Activated naive CD8-positive, alpha-beta T cell treated with anti-CD3 and anti-CD28 coated beads, Interleukin-2, amount 10 ng/mL, durations not matched to agents 7 days and 5 days (primary cell): ENCODE measurements at regions of chr5 and their contacts with region 1.

Region 1: GRCh38 chr5:139482050-139482889 is at the start of gene STING1:
- DNase-seq: peak; percentile 67
- ATAC-seq: peak; percentile 75
- H3K4me3 Mint-ChIP-seq: peak within 1 kb of the TSS; percentile 94
- H3K27ac Mint-ChIP-seq: peak within 1 kb of the TSS; percentile 97
- H3K4me1 Mint-ChIP-seq: peaks cover 21% of the 10 kb centered on the region
- H3K27me3 Mint-ChIP-seq: no peaks in the 10 kb centered on the region
- total RNA-seq, gene STING1: 63.6 to 68.4 TPM

Region 2: DNA sequence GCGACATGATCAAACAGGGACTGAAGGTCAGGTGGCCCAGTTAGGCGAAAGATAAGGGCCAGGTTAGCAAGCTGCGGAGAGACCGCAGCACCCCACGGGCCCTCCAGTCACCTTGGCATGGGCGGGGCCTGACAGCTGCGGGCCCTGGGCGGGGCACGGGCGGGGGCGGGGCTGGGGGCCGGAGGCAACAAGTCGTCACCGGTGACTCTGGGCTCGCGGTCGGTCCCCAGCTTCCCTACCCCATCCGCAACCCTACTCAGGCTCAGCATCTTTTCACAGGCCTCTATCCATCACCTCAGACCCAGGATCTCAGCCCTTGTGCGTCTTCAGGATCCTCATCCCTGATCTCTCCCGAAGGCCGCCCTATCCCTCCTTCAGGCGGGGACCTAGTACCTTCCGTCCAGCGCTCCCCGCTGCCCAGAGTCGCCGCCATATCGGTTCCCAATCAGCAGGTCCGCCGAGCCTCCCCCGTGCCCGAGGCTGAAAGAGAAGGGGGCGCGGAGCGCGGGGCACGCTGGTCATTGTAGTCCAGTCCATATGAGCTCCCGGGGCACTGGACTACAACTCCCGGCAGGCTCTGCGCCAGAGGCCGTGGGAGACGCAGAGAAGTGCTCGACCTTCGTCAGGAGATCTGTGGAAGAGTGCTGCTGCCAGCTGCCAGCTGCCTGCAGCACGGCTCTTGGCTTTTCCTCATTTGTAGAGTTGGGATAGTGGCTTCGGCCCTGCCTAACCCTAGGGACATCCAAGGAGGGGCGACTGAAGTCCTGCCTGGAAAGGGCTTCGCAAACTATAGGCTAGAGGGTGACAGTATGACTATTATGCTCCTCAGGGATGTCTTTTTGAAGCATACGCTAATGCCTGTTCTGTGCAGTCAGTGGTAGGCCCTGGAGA is 43.0 kb before region 1 on chr5 and contains the start of gene DNAJC18:
- POLR2A ChIA-PET with region 1: interaction called, 14 read pairs
- DNase-seq: peak; percentile 88
- ATAC-seq: peak; percentile 90
- H3K4me3 Mint-ChIP-seq: peak within 1 kb of the TSS; percentile 99
- H3K27ac Mint-ChIP-seq: peak within 1 kb of the TSS; percentile 100
- H3K4me1 Mint-ChIP-seq: peaks cover 27% of the 10 kb centered on the region
- H3K27me3 Mint-ChIP-seq: peaks cover 14% of the 10 kb centered on the region
- total RNA-seq, gene DNAJC18: 4.2 to 5.7 TPM

Region 3: DNA sequence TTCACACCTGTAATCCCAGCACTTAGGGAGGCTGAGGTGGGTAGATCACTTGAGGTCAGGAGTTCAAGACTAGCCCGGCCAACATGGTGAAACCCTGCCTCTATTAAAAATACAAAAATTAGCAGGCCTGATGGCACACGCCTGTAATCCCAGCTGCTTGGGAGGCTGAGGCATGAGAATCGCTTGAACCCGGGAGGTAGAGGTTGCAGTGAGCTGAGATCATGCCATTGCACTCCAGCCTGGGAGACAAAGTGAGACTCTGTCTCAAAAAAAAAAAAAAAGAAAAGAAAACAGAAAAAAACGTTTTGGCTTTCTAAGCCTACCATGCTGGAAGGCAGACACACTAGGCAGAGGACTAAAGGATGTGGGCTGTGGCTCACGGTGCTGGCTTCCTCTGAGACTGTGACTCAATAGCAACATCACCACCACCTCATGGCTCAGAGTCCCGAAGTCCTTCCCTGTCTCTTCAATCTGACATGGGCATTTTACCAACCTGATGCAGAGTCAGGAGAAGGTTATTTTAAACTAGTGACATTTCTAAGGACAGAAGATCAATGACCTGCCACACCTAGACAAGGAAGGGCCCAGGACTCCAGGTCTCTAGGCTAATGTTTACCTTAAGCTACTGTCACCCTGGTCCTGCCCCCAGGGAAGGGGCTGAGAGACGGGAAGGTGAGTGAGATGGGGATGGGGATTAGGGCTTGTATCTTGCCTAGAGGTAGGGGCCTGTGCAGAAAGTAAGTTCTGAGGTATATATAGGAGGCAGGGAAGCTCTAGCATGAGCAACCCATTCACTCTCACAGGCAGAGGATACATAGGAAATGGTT is 23.5 kb before region 1 on chr5:
- POLR2A ChIA-PET with region 1: interaction called, 19 read pairs
- DNase-seq: peak; percentile 65
- ATAC-seq: peak; percentile 96
- H3K4me3 Mint-ChIP-seq: peak overlapping the region; percentile 69
- H3K27ac Mint-ChIP-seq: peak overlapping the region; percentile 87
- H3K4me1 Mint-ChIP-seq: peaks cover 40% of the 10 kb centered on the region
- H3K27me3 Mint-ChIP-seq: peaks cover 12% of the 10 kb centered on the region

Region 4: GRCh38 chr5:139470821-139471300 is 11.4 kb before region 1 on chr5 and contains the start of gene SMIM33:
- POLR2A ChIA-PET with region 1: interaction called, 26 read pairs
- DNase-seq: peak; percentile 64
- ATAC-seq: peak; percentile 77
- H3K4me3 Mint-ChIP-seq: peak within 1 kb of the TSS; percentile 93
- H3K27ac Mint-ChIP-seq: peak within 1 kb of the TSS; percentile 98
- H3K4me1 Mint-ChIP-seq: peaks cover 52% of the 10 kb centered on the region
- H3K27me3 Mint-ChIP-seq: peaks cover 2% of the 10 kb centered on the region
- total RNA-seq, gene SMIM33: 0.34 to 0.44 TPM

Region 5: DNA sequence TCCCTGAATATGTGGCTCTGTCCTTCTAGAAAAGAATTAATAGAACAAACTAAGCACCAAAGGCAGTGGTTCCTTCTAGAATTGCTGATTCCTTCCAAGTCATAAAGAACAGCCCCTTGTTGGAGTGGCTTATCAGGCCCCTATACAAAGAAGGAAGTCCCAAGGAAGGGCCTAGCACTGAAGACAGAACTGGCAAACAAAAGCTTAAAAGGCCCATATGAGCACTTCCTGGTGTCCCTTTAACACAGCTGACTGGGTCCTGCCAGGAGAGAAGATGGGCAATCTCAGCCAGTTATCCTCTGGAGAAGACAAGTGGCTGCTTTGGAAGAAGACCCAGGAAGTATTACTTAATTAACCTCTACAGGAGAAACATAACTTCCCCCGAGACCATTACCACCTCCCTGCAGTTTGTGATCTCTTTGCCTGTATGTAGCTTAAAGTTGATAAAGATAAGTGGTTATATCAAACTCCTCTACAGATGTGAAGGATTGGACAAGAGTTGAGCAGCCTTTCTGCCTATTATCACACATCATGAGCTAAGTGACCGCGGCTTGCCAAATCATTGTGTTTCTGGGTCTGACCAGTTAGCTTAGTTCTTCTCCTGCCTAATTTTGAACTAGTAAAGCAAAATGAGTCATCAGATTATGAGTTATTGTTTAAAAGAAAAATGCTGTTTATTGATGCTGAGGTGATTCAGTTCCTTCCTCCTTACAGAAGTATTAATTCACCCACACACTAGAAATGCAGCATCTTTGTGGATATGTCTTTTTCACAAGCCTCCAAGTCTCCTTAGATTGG is 13.6 kb after region 1 on chr5:
- POLR2A ChIA-PET with region 1: interaction called, 10 read pairs
- DNase-seq: no peak
- ATAC-seq: no peak
- H3K4me3 Mint-ChIP-seq: no peak overlapping the region
- H3K27ac Mint-ChIP-seq: no peak overlapping the region
- H3K4me1 Mint-ChIP-seq: peaks cover 15% of the 10 kb centered on the region
- H3K27me3 Mint-ChIP-seq: peaks cover 12% of the 10 kb centered on the region

Region 6: DNA sequence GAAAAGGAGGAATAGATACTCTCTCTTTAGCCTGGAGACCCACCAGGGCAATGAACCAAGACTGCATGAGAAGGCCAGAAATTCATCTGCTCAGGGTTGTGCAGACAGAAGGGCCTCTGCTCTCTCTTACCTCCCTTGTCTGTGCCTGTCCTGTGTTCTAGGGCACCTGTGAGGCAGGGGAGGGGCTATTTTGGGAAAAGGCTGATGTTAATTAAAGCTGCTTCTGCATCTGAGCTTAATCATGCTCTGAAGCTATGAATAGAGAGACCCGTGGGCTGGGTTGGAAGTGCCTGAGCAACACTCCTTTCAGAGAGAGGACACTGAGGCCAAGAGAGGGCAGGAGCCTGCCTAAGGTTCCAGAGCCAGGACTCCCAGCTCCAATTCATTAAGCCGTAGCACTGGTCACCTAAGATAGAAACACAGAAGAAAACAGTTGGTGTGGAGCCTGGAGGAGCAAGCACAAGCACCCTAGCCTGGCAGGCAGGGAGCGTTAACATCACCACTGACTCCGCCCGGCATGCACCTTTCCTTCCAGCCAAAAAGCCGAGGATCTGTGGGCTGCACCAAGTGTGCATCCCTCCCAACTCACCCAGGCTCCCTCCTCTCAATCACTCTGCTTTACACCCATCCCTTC is 31.7 kb after region 1 on chr5:
- POLR2A ChIA-PET with region 1: interaction called, 11 read pairs
- DNase-seq: no peak
- ATAC-seq: no peak
- H3K4me3 Mint-ChIP-seq: no peak overlapping the region
- H3K27ac Mint-ChIP-seq: no peak overlapping the region
- H3K4me1 Mint-ChIP-seq: peaks cover 44% of the 10 kb centered on the region
- H3K27me3 Mint-ChIP-seq: peaks cover 5% of the 10 kb centered on the region

Region 7: DNA sequence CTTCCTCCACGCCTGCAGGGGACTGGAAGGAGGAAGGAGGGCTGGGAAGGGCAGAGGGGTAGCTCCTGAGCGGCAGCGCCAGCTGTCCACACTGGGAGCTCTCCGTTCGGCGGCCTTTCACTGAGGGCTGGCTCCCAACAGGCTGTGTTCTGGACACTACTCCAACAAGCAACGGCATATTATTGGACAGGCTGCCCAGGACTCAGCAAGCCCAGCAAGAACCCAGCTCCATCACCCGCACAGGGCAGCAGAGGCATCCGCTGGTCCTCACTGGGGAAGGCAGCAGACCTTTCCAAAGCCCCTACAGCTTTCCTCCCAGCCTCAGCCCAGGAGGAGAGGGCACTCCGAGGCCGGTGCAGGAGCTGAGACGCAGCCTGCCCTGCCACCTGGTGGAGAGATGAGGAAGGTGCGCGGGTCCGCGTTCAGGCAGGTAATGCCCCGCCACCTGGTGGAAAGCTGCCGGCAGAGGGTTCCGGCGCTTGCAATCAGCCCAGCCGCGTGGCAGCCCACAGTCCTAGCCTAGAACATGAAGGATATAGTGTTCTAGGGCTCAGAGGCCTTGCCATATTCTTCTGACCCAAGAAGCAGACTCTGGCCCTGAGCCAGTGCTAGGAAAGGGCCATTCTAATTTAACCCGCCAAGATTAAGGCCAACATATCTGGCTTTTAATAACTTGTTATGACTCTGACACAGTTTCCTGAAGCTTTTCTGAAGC is 486.4 kb after region 1 on chr5:
- POLR2A ChIA-PET with region 1: no interaction called
- DNase-seq: peak; percentile 93
- ATAC-seq: peak; percentile 97
- H3K4me3 Mint-ChIP-seq: no peak overlapping the region
- H3K27ac Mint-ChIP-seq: no peak overlapping the region
- H3K4me1 Mint-ChIP-seq: no peaks in the 10 kb centered on the region
- H3K27me3 Mint-ChIP-seq: peaks cover 20% of the 10 kb centered on the region